Activated CD4-positive, alpha-beta T cell treated with anti-CD3 and anti-CD28 coated beads for 36 hours (primary cell): ENCODE measurements at regions of chr4 and their contacts with region 1.

Region 1: DNA sequence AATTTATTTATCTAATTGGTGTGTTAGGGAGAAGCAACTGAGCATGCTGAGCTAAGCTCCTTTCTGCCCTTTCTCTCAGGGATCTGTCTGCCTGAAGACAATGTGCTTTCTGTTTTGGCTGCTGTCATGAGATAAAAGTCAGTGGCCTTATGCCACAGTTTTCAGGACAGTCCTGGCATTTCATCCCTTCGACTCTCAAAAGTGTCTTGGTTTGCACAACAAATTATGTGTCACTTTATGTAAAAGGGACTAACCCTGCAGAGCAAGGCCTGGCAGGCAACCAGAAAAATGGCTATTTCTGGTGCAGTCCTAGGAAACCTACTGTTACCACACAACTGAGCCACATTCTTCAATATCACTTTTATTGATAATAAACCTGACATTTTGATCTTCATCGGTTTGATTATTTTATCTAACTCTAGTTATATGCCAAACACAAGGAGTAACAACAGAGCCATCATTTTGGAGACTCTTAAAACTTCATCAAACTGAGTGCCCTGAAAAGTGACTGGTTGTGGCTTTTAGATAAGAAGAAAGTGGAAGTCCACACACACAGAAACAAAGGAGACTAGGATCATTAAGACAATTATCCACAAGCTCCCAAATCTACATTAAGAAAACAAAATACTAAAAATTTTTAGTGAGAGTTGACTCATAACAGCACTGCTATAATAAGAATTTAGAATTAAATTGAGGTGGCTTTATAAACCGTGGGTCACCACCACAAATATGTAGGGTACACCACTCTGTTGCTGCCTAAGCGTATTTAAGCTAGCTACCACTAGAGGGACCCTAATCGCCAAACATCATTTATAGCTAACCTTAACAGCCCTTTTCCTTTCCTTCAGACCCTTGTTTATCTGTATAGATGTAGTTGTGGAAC is 95.9 kb upstream of the PTPN13 start:
- DNase-seq: no peak
- ATAC-seq: peak; percentile 84
- H3K4me3 Mint-ChIP-seq: no peak overlapping the region
- H3K27ac Mint-ChIP-seq: no peak overlapping the region
- H3K4me1 Mint-ChIP-seq: no peaks in the 10 kb centered on the region
- H3K27me3 Mint-ChIP-seq: peaks cover 8% of the 10 kb centered on the region

Region 2: DNA sequence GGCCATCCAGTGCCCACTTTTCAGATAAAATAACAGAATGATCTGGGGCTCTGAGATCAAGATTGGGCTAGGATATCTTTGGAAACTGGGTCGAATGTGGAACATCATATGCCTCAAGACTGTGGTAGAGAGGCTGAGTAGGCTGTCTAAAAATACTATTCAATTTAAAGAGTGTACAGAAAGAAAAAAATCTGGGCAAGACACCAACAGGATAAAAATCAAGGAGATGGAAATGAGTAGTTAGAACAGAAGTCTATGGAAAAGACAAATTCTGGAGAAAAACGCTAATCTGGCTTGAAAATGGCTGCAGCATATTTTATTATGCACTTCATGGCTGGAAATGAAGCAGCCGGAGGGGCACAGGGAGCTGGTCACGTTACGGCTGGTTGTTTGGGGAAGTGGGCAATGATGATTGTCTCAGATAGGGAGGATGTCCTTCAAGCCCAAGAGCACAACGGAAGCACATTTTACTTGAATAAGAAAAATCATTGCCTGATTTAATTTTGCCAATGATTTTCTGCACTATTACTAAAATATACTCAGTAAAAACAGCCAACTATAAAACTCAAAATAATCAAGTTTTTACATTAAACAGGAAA is 111.3 kb before region 1 on chr4:
- CTCF ChIA-PET with region 1: no interaction called
- POLR2A ChIA-PET with region 1: no interaction called
- intact Hi-C with region 1: no loop called
- DNase-seq: no peak
- ATAC-seq: no peak
- H3K4me3 Mint-ChIP-seq: no peak overlapping the region
- H3K27ac Mint-ChIP-seq: no peak overlapping the region
- H3K4me1 Mint-ChIP-seq: no peaks in the 10 kb centered on the region
- H3K27me3 Mint-ChIP-seq: peaks cover 7% of the 10 kb centered on the region

Region 3: GRCh38 chr4:86508436-86508835 is 10.2 kb after region 1 on chr4:
- CTCF ChIA-PET with region 1: interaction called, 91 read pairs
- POLR2A ChIA-PET with region 1: no interaction called
- intact Hi-C with region 1: no loop called
- DNase-seq: no peak
- ATAC-seq: no peak
- H3K4me3 Mint-ChIP-seq: no peak overlapping the region
- H3K27ac Mint-ChIP-seq: no peak overlapping the region
- H3K4me1 Mint-ChIP-seq: no peaks in the 10 kb centered on the region
- H3K27me3 Mint-ChIP-seq: peaks cover 5% of the 10 kb centered on the region

Region 4: GRCh38 chr4:86522349-86522748 is 24.1 kb after region 1 on chr4:
- CTCF ChIA-PET with region 1: interaction called, 26 read pairs
- POLR2A ChIA-PET with region 1: no interaction called
- intact Hi-C with region 1: no loop called
- DNase-seq: no peak
- ATAC-seq: no peak
- H3K4me3 Mint-ChIP-seq: no peak overlapping the region
- H3K27ac Mint-ChIP-seq: no peak overlapping the region
- H3K4me1 Mint-ChIP-seq: no peaks in the 10 kb centered on the region
- H3K27me3 Mint-ChIP-seq: peaks cover 15% of the 10 kb centered on the region

Region 5: GRCh38 chr4:86895692-86896488 is 397.7 kb after region 1 on chr4:
- CTCF ChIA-PET with region 1: interaction called, 43 read pairs
- POLR2A ChIA-PET with region 1: no interaction called
- intact Hi-C with region 1: loop called (anchors 1 kb)
- DNase-seq: no peak
- ATAC-seq: peak; percentile 40
- H3K4me3 Mint-ChIP-seq: no peak overlapping the region
- H3K27ac Mint-ChIP-seq: no peak overlapping the region
- H3K4me1 Mint-ChIP-seq: peaks cover 7% of the 10 kb centered on the region
- H3K27me3 Mint-ChIP-seq: peaks cover 14% of the 10 kb centered on the region

Region 6: DNA sequence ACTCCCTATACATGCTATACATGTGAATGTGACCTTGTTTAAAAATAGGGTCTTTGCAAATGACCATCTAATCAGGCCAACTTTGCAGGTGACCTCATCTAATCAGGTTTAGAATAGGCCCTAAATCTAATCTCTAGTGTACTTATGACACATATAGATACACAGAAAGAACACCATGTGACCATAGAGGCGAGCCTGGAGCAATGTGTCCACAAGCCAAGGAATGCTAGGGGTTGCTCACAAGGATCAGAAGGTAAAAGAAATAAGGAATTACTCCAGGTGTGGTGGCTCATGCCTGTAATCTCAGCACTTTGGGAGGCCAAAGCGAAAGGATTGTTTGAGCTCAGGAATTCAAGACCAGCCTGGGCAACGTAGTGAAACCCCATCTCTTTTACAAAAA is 403.6 kb after region 1 on chr4:
- CTCF ChIA-PET with region 1: interaction called, 19 read pairs
- POLR2A ChIA-PET with region 1: no interaction called
- intact Hi-C with region 1: no loop called
- DNase-seq: no peak
- ATAC-seq: no peak
- H3K4me3 Mint-ChIP-seq: no peak overlapping the region
- H3K27ac Mint-ChIP-seq: no peak overlapping the region
- H3K4me1 Mint-ChIP-seq: no peaks in the 10 kb centered on the region
- H3K27me3 Mint-ChIP-seq: peaks cover 4% of the 10 kb centered on the region

Region 7: DNA sequence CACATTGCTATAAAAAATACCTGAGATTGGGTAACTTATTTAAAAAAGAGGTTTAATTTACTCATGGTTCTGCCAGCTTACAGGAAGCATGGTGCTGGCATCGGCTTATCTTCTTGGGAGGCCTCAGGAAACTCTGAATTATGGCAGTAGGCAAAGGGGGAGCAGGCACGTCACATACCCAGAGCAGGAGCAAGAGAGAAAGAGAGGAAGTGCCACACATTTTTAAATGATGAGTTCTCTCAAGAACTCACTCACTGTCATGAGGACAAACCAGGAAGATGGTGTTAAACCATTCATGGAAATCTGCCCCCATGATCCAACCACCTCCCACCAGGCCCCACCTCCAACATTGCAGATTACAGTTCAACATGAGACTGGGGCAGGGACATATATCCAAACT is 426.6 kb after region 1 on chr4:
- CTCF ChIA-PET with region 1: interaction called, 11 read pairs
- POLR2A ChIA-PET with region 1: no interaction called
- intact Hi-C with region 1: no loop called
- DNase-seq: no peak
- ATAC-seq: no peak
- H3K4me3 Mint-ChIP-seq: no peak overlapping the region
- H3K27ac Mint-ChIP-seq: no peak overlapping the region
- H3K4me1 Mint-ChIP-seq: peaks cover 24% of the 10 kb centered on the region
- H3K27me3 Mint-ChIP-seq: no peaks in the 10 kb centered on the region

Region 8: GRCh38 chr4:87235020-87235671 is 736.9 kb after region 1 on chr4:
- CTCF ChIA-PET with region 1: no interaction called
- POLR2A ChIA-PET with region 1: no interaction called
- intact Hi-C with region 1: loop called (anchors 1 to 5 kb)
- DNase-seq: no peak
- ATAC-seq: no peak
- H3K4me3 Mint-ChIP-seq: peak overlapping the region; percentile 69
- H3K27ac Mint-ChIP-seq: no peak overlapping the region
- H3K4me1 Mint-ChIP-seq: peaks cover 1% of the 10 kb centered on the region
- H3K27me3 Mint-ChIP-seq: no peaks in the 10 kb centered on the region